ENCODE measurements at regions of chr14 and their contacts with region 1.

Region 1: DNA sequence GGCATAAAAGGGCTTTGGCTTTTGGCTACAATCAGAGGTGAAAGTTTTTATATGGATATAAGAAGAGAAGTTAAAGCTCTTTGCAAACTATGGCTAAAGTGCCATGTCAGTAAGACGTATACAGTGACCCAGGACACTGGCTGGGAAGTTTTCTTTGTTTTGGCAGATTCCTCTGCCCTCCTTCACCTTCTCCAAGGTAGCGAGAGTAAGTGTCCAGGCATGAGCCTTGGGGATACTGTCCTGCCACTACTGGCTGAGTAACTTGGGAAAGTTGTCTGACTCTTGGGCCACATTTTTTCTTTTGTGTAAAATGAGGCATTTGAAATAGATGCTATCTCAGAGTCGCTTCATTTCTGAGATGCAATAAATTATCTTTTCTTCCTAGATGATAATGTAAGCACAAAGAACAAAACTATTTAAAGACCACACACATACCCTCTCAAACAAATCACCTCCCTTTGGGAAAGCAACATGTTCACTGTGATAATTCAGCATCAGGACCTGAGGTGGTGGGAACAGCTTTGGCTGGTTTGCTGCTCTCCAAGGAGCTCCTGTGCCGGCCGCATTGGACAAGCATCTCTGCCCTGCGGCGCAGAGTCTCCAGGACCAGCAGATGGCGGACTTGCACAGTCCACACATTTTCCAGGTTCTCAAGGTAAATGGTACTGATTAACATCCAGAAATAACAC is 106.3 kb downstream of the PTCSC3 start:
- DNase-seq: peak; percentile 63
- H3K4me3 Mint-ChIP-seq: no peak overlapping the region
- H3K27ac Mint-ChIP-seq: no peak overlapping the region
- H3K4me1 Mint-ChIP-seq: peaks cover 2% of the 10 kb centered on the region
- H3K27me3 Mint-ChIP-seq: peaks cover 14% of the 10 kb centered on the region

Region 2: DNA sequence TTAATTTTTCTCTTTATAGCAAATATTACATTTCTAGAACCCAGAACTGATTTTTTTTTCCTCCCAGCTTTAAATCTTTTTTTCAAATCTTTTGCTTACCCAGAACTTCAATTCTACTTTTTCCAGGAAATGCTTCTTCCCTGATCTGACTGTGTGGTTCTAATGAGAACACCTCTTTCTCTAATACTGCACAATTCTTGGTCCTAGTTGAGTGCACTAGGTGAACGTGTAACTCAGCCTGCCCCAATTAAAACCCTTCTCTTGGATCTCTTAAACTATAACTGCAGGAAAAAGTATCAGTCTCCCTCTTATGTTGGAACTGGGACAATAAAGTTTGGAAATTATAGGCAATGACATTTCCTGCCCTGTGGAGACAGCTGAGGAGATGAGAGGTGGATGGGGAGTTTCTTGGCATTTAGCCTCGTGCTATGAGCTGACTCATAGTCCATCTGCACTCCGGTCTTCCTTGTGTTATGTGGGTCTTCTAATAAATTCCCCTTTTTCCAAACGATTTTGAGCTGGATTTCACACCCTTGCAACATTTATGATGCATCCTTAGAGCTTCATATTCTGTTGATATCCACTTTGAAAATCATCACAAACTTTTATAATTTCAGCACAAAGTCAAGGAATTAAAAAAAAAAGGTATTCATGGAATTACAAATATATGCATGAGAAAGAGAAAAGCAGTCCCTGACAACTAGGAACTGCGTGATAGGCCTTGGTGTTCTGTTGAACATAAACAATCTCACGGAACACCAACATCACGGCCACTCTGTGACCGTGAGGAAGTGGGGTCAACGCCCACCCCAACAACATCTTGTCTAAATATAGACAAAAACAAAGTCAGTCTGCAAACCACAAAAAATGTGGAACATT is 191.7 kb before region 1 on chr14:
- CTCF ChIA-PET with region 1: interaction called, 60 read pairs
- POLR2A ChIA-PET with region 1: no interaction called
- intact Hi-C with region 1: loop called (anchors 1 kb)
- DNase-seq: no peak
- H3K4me3 Mint-ChIP-seq: no peak overlapping the region
- H3K27ac Mint-ChIP-seq: no peak overlapping the region
- H3K4me1 Mint-ChIP-seq: no peaks in the 10 kb centered on the region
- H3K27me3 Mint-ChIP-seq: no peaks in the 10 kb centered on the region

Region 3: GRCh38 chr14:35883677-35884293 is 186.4 kb before region 1 on chr14:
- CTCF ChIA-PET with region 1: interaction called, 60 read pairs
- POLR2A ChIA-PET with region 1: no interaction called
- intact Hi-C with region 1: loop called (anchors 1 kb)
- DNase-seq: peak; percentile 28
- H3K4me3 Mint-ChIP-seq: no peak overlapping the region
- H3K27ac Mint-ChIP-seq: no peak overlapping the region
- H3K4me1 Mint-ChIP-seq: no peaks in the 10 kb centered on the region
- H3K27me3 Mint-ChIP-seq: no peaks in the 10 kb centered on the region

Region 4: GRCh38 chr14:35963209-35963608 is 107.0 kb before region 1 on chr14:
- CTCF ChIA-PET with region 1: interaction called, 10 read pairs
- POLR2A ChIA-PET with region 1: no interaction called
- intact Hi-C with region 1: loop called (anchors 5 kb)
- DNase-seq: no peak
- H3K4me3 Mint-ChIP-seq: no peak overlapping the region
- H3K27ac Mint-ChIP-seq: no peak overlapping the region
- H3K4me1 Mint-ChIP-seq: no peaks in the 10 kb centered on the region
- H3K27me3 Mint-ChIP-seq: peaks cover 2% of the 10 kb centered on the region

Region 5: GRCh38 chr14:36059531-36059930 is 10.6 kb before region 1 on chr14:
- CTCF ChIA-PET with region 1: interaction called, 13 read pairs
- POLR2A ChIA-PET with region 1: no interaction called
- intact Hi-C with region 1: no loop called
- DNase-seq: no peak
- H3K4me3 Mint-ChIP-seq: no peak overlapping the region
- H3K27ac Mint-ChIP-seq: no peak overlapping the region
- H3K4me1 Mint-ChIP-seq: no peaks in the 10 kb centered on the region
- H3K27me3 Mint-ChIP-seq: peaks cover 4% of the 10 kb centered on the region

Region 6: DNA sequence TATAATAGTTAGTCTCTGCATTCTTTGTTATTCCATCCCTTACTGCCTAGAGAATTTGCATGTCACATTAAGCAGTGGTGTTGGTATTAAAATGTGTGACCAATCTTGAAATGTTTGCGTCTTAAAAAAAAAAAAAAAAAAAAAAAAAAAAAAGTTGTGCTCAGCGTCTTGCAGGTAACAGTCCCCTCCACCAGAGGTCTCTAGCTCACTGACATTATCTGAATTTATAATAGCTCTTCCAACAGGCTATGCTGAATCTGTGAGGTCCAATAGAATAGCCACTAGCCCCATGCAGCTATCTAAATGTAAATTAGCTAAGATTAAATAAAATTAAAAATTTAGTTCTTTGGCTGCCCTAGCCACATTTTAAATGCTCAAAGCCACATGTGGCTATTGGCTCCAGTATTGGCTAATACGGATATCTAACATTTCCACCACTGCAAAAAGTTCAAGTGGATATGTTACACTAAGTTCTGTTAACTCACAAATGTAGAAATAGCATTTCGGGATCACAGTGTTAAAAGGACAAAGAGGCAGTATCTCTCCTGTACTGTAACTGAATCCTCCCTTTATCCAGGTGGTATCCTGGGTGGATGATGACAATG is 483.6 kb after region 1 on chr14:
- CTCF ChIA-PET with region 1: interaction called, 8 read pairs
- POLR2A ChIA-PET with region 1: no interaction called
- intact Hi-C with region 1: loop called (anchors 1 kb)
- DNase-seq: no peak
- H3K4me3 Mint-ChIP-seq: no peak overlapping the region
- H3K27ac Mint-ChIP-seq: no peak overlapping the region
- H3K4me1 Mint-ChIP-seq: no peaks in the 10 kb centered on the region
- H3K27me3 Mint-ChIP-seq: peaks cover 8% of the 10 kb centered on the region

Region 7: DNA sequence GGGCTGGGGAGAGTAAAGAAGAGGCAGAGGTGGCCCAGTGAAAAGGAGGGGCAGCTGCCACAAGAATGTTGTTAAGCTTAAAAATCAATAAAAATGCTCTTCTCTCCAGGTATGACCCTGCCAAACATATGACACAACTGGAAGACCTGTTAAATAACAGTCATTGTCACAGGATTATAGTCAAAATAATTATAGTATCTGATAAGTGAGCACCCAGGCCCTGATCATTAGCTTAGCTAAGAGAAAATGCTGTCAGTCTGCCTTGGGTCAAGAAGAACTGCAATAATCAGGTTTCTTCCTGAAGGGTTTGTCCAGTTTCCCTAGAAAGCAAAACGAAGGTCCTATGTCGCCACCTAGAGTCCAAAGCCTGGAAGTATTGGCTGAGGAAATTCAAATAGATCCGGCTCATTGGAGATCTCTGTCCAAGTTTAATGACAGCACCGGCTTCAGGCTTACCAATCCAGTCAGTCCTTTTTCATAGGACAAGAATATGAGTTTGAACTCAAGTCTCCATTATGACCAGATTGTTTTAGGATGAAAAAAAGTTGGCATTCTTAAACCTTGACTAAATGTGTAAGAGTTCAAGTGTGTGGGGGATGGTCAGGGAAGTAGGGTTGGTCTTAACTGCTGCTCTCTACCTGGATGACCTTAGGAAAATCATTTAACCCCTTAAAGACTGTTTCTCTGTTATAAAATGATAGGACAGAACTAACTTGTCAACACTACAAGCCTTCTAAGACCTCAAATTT is 534.8 kb after region 1 on chr14:
- CTCF ChIA-PET with region 1: no interaction called
- POLR2A ChIA-PET with region 1: no interaction called
- intact Hi-C with region 1: loop called (anchors 2 kb)
- DNase-seq: peak; percentile 40
- H3K4me3 Mint-ChIP-seq: no peak overlapping the region
- H3K27ac Mint-ChIP-seq: no peak overlapping the region
- H3K4me1 Mint-ChIP-seq: no peaks in the 10 kb centered on the region
- H3K27me3 Mint-ChIP-seq: peaks cover 10% of the 10 kb centered on the region